ENCODE measurements at regions of chr6 and their contacts with region 1.

Region 1: GRCh38 chr6:170554013-170554795 is at the start of gene TBP:
- DNase-seq: peak; percentile 97 to 98
- H3K4me3 ChIP-seq: peak within 1 kb of the TSS; percentile 92
- H3K4me3 Mint-ChIP-seq: no peak within 1 kb of the TSS
- H3K27ac Mint-ChIP-seq: no peak within 1 kb of the TSS
- H3K4me1 ChIP-seq: peaks cover 9% of the 10 kb centered on the region
- H3K4me1 Mint-ChIP-seq: peaks cover 8% of the 10 kb centered on the region
- H3K27me3 ChIP-seq: no peaks in the 10 kb centered on the region
- H3K27me3 Mint-ChIP-seq: no peaks in the 10 kb centered on the region
- CTCF ChIP-seq: no peak
- total RNA-seq, gene TBP: 20.8 and 23.7 TPM in 2 replicates

Region 2: GRCh38 chr6:169701954-169702839 is 852.0 kb before region 1 on chr6 and contains the starts of genes C6orf120 and WDR27:
- CTCF ChIA-PET with region 1: no interaction called
- POLR2A ChIA-PET with region 1: no interaction called
- intact Hi-C with region 1: loop called (anchors 5 kb)
- DNase-seq: peak; percentile 95 to 97
- H3K4me3 ChIP-seq: peak within 1 kb of the TSS; percentile 87
- H3K4me3 Mint-ChIP-seq: peak within 1 kb of the TSS; percentile 85
- H3K27ac Mint-ChIP-seq: peak within 1 kb of the TSS; percentile 85
- H3K4me1 ChIP-seq: peaks cover 25% of the 10 kb centered on the region
- H3K4me1 Mint-ChIP-seq: peaks cover 13% of the 10 kb centered on the region
- H3K27me3 ChIP-seq: no peaks in the 10 kb centered on the region
- H3K27me3 Mint-ChIP-seq: no peaks in the 10 kb centered on the region
- CTCF ChIP-seq: no peak
- total RNA-seq, gene C6orf120: 24.9 and 26.4 TPM in 2 replicates
- total RNA-seq, gene WDR27: 62.9 and 70.1 TPM in 2 replicates

Region 3: DNA sequence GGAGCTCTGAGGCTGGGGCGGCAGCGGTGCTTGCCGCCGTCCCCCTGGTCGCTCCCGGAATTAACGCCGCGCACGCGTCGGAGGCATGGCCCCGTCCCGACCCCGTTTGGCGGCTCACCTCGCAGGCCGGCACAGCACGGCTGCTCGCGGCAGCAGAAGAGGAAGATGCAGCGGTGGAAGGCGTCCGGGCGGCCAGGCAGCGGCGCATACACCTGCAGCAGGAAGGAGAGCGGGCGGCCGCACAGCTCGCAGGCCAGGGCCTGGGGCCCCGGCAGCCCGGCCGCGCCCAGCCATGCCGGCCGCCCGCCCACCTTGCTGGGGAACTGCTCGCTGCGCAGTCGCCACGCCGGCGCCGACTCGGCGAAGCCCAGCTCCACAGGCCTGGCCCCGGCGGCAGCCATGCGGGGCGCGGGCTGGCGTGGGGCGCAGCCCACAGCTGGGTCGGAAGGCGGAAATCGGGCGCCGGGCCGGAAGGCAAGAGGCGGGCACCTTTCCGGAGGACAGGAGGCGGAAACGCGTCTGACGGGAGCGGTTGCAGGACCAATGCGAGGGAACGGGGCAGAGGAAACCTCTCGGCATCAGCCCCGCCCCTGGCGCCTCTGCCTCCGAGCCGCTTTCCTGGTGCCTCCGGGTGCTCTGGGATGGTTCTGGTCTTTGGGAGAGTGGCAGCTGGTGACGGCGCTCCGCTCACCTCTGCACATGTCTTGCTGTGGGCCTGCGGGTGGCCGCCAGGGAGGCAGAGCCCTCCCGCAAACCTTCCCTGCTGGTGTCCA is 30.2 kb after region 1 on chr6 and contains the start of gene PDCD2:
- CTCF ChIA-PET with region 1: interaction called, 5 read pairs
- POLR2A ChIA-PET with region 1: interaction called, 6 read pairs
- intact Hi-C with region 1: loop called (anchors 1 kb)
- DNase-seq: peak; percentile 93
- H3K4me3 ChIP-seq: peak within 1 kb of the TSS; percentile 80
- H3K4me3 Mint-ChIP-seq: peak within 1 kb of the TSS; percentile 93
- H3K27ac Mint-ChIP-seq: peak within 1 kb of the TSS; percentile 81
- H3K4me1 ChIP-seq: peaks cover 21% of the 10 kb centered on the region
- H3K4me1 Mint-ChIP-seq: peaks cover 6% of the 10 kb centered on the region
- H3K27me3 ChIP-seq: no peaks in the 10 kb centered on the region
- H3K27me3 Mint-ChIP-seq: no peaks in the 10 kb centered on the region
- CTCF ChIP-seq: no peak
- total RNA-seq, gene PDCD2: 73.0 and 74.4 TPM in 2 replicates

Measured in Caco-2 (cell line).